ENCODE measurements at regions of chr4 and their contacts with region 1.

Region 1: GRCh38 chr4:52983563-52984303 is 121.6 kb downstream of the RASL11B start:
- DNase-seq: no peak
- ATAC-seq: peak; percentile 85

Region 2: DNA sequence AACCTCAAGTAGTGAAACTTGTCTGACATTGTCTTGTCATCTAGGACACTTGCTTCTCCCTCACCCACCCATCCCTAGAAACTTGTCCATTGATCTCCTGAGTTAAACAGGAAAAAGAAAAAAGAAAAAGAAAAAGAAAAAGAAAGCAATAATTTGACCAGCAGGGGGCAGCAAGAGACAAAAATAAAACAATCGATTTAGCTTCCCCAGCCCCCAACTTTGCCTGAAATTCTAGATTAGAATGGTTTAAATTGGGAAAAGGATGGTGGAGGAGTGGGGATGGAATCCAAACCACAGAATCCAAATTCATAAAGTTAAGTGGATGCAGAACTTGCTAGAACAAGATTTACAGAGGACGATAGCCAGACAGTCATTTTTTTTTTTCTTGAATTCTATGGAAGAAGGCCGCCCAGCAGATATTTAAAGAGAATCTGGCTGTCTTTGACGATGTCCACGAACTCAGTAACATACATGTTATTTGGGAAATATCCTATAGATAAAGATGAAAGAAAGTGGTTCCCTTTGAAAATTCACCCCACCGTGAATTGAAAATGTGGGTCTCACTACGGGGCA is 607.5 kb before region 1 on chr4:
- intact Hi-C with region 1: loop called in 1 of 2 experiments (anchors 5 kb)
- DNase-seq: peak in 1 of 2 donors; percentile 12
- ATAC-seq: no peak

Region 3: GRCh38 chr4:52545099-52546069 is 438.3 kb before region 1 on chr4:
- intact Hi-C with region 1: loop called (anchors 2 to 10 kb)
- DNase-seq: peak; percentile 43 to 86
- ATAC-seq: peak; percentile 95

Region 4: DNA sequence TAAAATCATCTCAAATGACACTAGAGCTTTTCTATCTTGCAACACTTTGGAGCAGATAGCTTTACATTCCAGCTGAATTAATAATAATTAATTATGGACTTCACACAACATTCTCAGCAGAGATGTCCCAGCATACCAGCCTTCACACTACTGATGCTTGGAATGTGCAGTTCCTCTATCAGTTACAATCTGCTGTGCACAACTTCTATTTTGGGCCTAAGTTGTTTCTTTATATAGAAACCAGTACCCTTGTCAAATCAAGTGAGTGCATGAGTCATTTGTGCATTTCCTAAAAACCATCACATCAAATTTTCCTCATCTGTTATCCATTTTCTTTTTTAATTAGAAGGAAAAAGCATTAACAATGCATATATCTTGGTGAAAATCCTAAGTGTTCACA is 130.4 kb before region 1 on chr4:
- intact Hi-C with region 1: no loop called
- DNase-seq: no peak
- ATAC-seq: no peak

Region 5: DNA sequence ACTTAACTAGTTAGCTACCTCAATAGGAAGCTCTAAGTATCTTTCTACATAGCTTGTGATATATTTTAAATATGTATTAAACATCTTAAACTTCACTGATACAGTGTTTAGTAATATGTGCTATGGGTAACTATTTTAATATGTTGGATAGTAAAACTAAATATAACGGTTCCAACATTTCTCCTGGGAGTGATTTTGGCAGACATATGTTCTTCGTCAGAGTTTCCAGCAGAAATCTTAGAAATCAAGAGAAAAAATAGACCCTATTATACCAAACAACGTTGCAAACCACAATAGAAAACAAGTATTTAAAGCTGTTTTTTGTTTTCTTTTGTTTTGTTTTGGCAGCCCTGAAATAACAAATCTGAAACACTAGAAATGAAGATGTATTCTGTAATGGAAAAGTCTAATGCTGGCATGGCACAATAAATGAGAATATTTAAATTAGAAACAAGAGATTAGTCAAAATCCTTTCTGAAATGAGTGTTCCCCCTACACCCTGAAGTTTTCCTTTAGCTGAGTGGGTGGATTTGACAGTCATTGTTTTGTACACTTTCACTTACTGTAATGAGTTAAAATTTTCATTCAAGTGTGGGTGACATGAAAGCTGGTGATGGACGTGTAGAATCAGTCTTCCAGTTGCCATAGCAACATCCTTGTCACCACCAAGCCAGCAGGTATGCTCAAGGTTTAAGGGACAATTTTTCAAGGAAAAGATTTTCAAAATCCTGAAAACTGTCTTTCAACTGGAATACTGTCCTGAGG is 148.6 kb after region 1 on chr4:
- intact Hi-C with region 1: no loop called
- DNase-seq: no peak
- ATAC-seq: no peak